A673 (cell line): ENCODE measurements at regions of chr4 and their contacts with region 1.

Region 1: DNA sequence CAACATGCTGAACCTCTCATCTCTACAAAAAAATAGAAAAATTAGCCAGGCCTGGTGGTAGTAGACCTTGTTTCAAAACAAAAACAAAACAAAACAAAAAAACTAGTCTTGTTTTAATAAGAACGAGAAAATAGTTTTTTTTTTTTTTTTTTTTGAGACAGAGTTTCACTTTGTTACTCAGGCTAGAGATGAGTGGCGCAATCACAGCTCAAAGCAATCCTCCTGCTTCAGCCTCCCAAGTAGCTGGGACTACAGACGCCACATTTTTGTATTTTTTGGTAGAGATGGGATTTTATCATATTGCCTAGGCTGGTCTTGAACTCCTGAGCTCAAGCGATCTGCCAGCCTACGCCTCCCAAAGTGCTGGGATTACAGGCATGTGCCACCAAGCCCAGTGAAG is 47.7 kb upstream of the UGDH start:
- DNase-seq: no peak
- H3K4me3 ChIP-seq: no peak overlapping the region
- H3K27ac ChIP-seq: no peak overlapping the region
- H3K4me1 ChIP-seq: no peaks in the 10 kb centered on the region
- H3K27me3 ChIP-seq: no peaks in the 10 kb centered on the region
- CTCF ChIP-seq: no peak

Region 2: DNA sequence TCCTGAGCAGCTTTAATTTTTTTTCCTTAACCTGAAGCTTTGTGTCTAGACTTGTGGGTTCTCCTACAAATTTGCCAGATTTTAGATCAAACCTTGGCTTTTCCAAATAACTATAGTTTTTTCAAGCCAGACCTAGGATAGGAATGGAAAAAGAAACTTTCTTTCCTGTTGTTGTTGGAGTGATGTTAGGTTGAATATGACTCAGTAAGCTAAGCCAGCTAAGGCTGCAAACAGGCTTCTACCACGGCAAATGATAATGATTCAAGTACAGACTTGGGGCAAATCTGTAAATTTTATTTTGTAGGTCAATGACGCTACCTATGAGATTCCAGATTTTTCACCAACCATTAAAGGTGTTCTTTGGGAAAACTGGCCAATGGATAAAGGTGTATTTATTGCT is 347.0 kb before region 1 on chr4:
- CTCF ChIA-PET with region 1: no interaction called
- POLR2A ChIA-PET with region 1: no interaction called
- intact Hi-C with region 1: no loop called
- DNase-seq: no peak
- H3K4me3 ChIP-seq: no peak overlapping the region
- H3K27ac ChIP-seq: no peak overlapping the region
- H3K4me1 ChIP-seq: no peaks in the 10 kb centered on the region
- H3K27me3 ChIP-seq: no peaks in the 10 kb centered on the region
- CTCF ChIP-seq: no peak

Region 3: DNA sequence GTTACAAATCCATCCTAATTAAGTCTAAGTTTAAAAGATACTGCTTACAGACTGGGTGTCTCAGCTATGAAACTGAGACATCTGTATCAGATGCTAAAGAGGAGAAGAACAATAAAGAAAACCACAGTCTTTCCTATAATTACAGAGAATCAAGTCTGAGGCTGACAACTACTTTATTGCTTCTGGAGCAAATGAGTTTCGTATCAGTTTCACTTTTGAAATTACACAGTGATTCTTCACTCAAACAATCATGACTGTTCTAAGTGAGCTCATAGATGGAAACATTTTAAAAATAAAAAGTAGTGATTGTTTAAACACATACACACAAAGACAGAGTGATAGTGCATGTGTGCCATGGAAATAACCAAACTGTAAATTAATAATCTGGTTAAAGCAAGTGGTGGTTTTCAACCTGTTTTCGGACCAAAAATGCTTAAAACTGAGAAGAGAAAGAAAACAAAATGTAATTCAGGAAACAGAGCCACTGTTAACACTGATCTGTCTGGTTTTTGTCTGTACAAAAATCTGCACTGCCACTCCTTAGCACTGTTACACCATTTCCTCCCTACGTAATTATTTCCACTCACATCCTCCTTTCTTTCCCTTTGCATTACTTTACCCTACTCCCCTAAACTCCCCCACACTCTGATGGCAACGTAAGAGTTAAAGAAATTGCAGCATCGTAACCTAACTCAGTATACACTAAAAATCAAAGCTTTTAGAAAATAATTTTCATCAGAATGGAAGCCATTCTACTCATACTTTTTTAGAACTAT is 221.3 kb before region 1 on chr4:
- CTCF ChIA-PET with region 1: no interaction called
- POLR2A ChIA-PET with region 1: no interaction called
- intact Hi-C with region 1: no loop called
- DNase-seq: peak; percentile 61
- H3K4me3 ChIP-seq: peak overlapping the region; percentile 48
- H3K27ac ChIP-seq: peak overlapping the region; percentile 95
- H3K4me1 ChIP-seq: peaks cover 29% of the 10 kb centered on the region
- H3K27me3 ChIP-seq: no peaks in the 10 kb centered on the region
- CTCF ChIP-seq: no peak

Region 4: DNA sequence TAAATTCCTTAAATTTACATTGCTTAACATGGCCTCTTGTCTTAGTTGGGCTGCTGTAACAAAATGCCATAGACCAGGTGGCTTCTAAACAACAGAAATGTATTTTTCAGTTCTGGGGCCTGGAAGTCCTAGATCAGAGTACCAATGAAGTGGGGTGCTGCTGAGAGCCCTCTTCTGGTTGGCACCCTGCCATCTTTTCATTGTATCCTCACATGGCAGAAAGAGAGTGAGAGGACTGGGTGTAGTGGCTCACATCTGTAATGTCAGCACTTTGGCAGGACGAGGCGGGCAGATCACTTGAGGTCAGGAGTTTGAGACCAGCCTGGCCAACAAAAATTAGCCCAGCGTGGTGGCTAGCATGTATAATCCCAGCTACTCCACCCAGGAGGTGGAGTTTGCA is 180.2 kb before region 1 on chr4:
- CTCF ChIA-PET with region 1: no interaction called
- POLR2A ChIA-PET with region 1: no interaction called
- intact Hi-C with region 1: no loop called
- DNase-seq: peak; percentile 10
- H3K4me3 ChIP-seq: no peak overlapping the region
- H3K27ac ChIP-seq: no peak overlapping the region
- H3K4me1 ChIP-seq: no peaks in the 10 kb centered on the region
- H3K27me3 ChIP-seq: no peaks in the 10 kb centered on the region
- CTCF ChIP-seq: no peak

Region 5: DNA sequence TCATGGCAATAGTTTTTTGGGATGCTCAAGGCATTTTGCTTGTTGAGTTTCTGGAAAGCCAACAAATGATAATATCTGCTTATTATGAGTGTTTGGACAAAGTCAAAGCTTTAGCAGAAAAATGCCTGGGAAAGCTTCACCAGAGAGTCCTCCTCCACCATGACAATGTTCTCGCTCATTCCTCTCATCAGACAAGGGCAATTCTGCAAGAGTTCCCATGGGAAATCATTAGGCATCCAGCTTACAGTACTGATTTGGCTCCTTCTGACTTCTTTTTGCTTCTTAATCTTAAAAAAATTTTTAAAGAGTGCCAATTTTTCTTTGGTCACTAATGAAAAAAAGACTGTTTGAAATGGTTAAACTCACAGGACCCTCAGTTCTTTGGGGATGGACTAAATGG is 259.3 kb after region 1 on chr4:
- CTCF ChIA-PET with region 1: no interaction called
- POLR2A ChIA-PET with region 1: interaction called, 14 read pairs
- intact Hi-C with region 1: no loop called
- DNase-seq: no peak
- H3K4me3 ChIP-seq: no peak overlapping the region
- H3K27ac ChIP-seq: no peak overlapping the region
- H3K4me1 ChIP-seq: no peaks in the 10 kb centered on the region
- H3K27me3 ChIP-seq: no peaks in the 10 kb centered on the region
- CTCF ChIP-seq: no peak

Region 6: DNA sequence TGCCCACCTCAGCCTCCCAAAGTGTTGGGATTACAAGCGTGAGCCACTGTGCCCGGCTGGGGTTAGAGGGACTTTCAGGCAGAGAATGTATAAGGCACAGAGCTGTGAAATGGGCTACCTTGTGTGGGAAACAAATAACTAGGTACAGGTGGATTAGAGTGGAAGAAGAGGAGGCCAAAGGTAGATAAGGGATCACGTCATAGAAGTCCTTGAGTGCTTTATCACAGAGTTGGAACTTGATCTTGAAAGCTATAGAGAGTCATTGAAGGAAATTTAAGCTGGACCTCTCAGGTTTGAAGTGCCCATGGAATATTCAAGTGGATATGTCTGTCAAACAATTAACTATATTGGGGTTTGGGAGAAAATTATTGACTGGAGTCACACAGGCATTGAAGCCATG is 490.1 kb after region 1 on chr4:
- CTCF ChIA-PET with region 1: no interaction called
- POLR2A ChIA-PET with region 1: no interaction called
- intact Hi-C with region 1: no loop called
- DNase-seq: no peak
- H3K4me3 ChIP-seq: no peak overlapping the region
- H3K27ac ChIP-seq: no peak overlapping the region
- H3K4me1 ChIP-seq: no peaks in the 10 kb centered on the region
- H3K27me3 ChIP-seq: no peaks in the 10 kb centered on the region
- CTCF ChIP-seq: no peak